Activated B cell treated with CpG ODN at 0.5 μM for 24 hours (primary cell): ENCODE measurements at regions of chr14 and their contacts with region 1.

Region 1: GRCh38 chr14:103104654-103105452 is 10.3 kb downstream of the EXOC3L4 start:
- DNase-seq: peak; percentile 75
- ATAC-seq: peak; percentile 72
- H3K4me3 Mint-ChIP-seq: peak overlapping the region; percentile 11
- H3K27ac Mint-ChIP-seq: peak overlapping the region; percentile 18
- H3K4me1 Mint-ChIP-seq: peaks cover 40% of the 10 kb centered on the region
- H3K27me3 Mint-ChIP-seq: peaks cover 17% of the 10 kb centered on the region
- CTCF ChIP-seq: peak; percentile 50

Region 2: GRCh38 chr14:103016086-103016485 is 88.8 kb before region 1 on chr14:
- CTCF ChIA-PET with region 1: no interaction called
- POLR2A ChIA-PET with region 1: interaction called, 13 read pairs
- intact Hi-C with region 1: no loop called
- DNase-seq: no peak
- ATAC-seq: no peak
- H3K4me3 Mint-ChIP-seq: no peak overlapping the region
- H3K27ac Mint-ChIP-seq: no peak overlapping the region
- H3K4me1 Mint-ChIP-seq: peaks cover 19% of the 10 kb centered on the region
- H3K27me3 Mint-ChIP-seq: no peaks in the 10 kb centered on the region
- CTCF ChIP-seq: no peak

Region 3: DNA sequence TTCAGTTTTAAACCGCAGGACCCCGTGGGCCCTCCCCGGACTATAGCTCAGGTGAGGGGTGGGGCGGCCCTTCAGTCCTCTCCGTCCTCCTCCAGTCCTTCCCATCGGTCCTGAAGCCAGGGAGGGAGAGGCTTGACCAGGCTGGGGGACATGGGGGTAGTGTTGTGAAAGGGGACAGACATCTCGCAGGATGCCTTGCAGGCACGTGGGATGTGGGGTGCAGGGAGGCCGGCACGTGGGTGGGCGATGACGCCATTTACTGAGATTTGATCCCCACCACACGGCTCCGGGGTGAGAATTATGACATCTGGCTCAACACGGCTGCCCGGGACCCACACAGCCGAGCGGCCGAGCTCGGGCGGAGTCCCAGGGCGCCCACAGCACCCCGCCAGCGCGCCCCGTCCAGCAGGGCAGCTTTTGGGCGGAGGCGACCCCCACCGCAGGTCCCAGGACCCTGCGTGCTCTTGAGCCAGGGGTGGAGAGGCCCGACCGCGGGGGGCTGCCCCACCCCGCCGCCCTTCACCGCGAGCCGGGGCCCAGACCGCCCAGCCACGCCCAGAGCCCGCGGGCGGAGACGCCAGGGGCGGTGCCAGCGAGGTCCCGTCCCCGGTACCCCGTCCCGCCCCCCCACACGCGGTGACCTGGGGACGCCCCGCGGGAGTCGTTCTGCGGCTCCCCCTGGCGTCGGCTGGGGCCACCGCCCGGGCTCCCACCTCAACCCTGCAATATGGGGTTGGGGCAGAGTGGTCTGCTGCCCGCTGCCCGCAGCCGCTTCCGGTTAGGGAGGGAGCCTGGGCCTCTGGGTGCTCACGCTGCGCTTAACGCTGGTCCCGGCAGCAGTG is 13.6 kb before region 1 on chr14:
- CTCF ChIA-PET with region 1: interaction called, 14 read pairs
- POLR2A ChIA-PET with region 1: no interaction called
- intact Hi-C with region 1: no loop called
- DNase-seq: peak; percentile 70
- ATAC-seq: peak; percentile 96
- H3K4me3 Mint-ChIP-seq: peak overlapping the region; percentile 72
- H3K27ac Mint-ChIP-seq: no peak overlapping the region
- H3K4me1 Mint-ChIP-seq: peaks cover 8% of the 10 kb centered on the region
- H3K27me3 Mint-ChIP-seq: peaks cover 7% of the 10 kb centered on the region
- CTCF ChIP-seq: peak; percentile 49

Region 4: DNA sequence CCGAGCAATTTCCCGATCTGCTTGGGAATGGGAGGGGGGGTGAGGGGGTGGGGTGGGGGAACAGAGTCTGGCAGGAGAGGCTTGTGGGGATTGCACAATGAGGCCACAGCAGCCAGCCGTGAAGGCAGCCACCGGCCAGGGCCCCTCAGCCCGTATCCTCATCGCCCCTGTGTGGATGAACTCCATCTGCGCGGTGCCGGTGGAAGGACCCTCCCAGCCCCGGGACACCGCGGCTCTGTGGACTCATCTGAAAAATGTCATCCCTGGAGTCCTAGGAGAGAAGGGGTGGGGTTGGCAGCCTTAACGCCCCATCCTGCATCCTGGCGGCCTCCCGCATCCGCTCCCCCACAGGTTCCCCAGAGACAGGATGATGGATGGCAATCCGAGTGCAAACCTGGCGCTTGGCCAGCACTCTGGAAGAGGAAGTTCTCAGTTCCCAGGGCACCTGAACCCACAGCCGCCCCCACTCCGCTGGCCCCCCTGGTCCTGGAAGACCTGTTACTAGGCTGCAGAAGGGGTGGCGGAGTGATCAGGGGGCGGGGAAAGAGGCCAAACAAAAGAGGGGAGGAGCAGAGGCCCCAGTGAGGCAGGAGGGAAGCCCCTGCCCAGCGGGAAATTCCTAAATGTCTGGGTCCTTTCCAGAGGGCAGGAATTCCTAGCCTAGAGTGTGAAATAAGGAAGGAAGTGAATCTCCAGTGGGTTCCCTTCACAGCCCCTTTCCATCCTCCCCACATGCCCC is 17.2 kb after region 1 on chr14:
- CTCF ChIA-PET with region 1: interaction called, 6 read pairs
- POLR2A ChIA-PET with region 1: no interaction called
- intact Hi-C with region 1: loop called (anchors 2 kb)
- DNase-seq: no peak
- ATAC-seq: peak; percentile 32
- H3K4me3 Mint-ChIP-seq: peak overlapping the region; percentile 2
- H3K27ac Mint-ChIP-seq: no peak overlapping the region
- H3K4me1 Mint-ChIP-seq: peaks cover 14% of the 10 kb centered on the region
- H3K27me3 Mint-ChIP-seq: peaks cover 24% of the 10 kb centered on the region
- CTCF ChIP-seq: no peak

Region 5: GRCh38 chr14:103185051-103185992 is 80.5 kb after region 1 on chr14:
- CTCF ChIA-PET with region 1: interaction called, 32 read pairs
- POLR2A ChIA-PET with region 1: no interaction called
- intact Hi-C with region 1: loop called (anchors 1 kb)
- DNase-seq: no peak
- ATAC-seq: peak; percentile 28
- H3K4me3 Mint-ChIP-seq: no peak overlapping the region
- H3K27ac Mint-ChIP-seq: no peak overlapping the region
- H3K4me1 Mint-ChIP-seq: peaks cover 7% of the 10 kb centered on the region
- H3K27me3 Mint-ChIP-seq: peaks cover 40% of the 10 kb centered on the region
- CTCF ChIP-seq: peak; percentile 61

Region 6: GRCh38 chr14:103385152-103385993 is 280.5 kb after region 1 on chr14 and contains the start of gene MARK3:
- CTCF ChIA-PET with region 1: interaction called, 9 read pairs
- POLR2A ChIA-PET with region 1: no interaction called
- intact Hi-C with region 1: loop called (anchors 5 kb)
- DNase-seq: peak; percentile 93
- ATAC-seq: peak; percentile 90
- H3K4me3 Mint-ChIP-seq: peak within 1 kb of the TSS; percentile 97
- H3K27ac Mint-ChIP-seq: peak within 1 kb of the TSS; percentile 93
- H3K4me1 Mint-ChIP-seq: peaks cover 45% of the 10 kb centered on the region
- H3K27me3 Mint-ChIP-seq: peaks cover 2% of the 10 kb centered on the region
- CTCF ChIP-seq: no peak
- total RNA-seq, gene MARK3: 97.1 and 110 TPM in 2 replicates

Region 7: GRCh38 chr14:104011824-104012468 is 907.1 kb after region 1 on chr14:
- CTCF ChIA-PET with region 1: no interaction called
- POLR2A ChIA-PET with region 1: no interaction called
- intact Hi-C with region 1: no loop called
- DNase-seq: no peak
- ATAC-seq: no peak
- H3K4me3 Mint-ChIP-seq: no peak overlapping the region
- H3K27ac Mint-ChIP-seq: no peak overlapping the region
- H3K4me1 Mint-ChIP-seq: no peaks in the 10 kb centered on the region
- H3K27me3 Mint-ChIP-seq: peaks cover 5% of the 10 kb centered on the region
- CTCF ChIP-seq: no peak